ENCODE measurements at regions of chr12 and their contacts with region 1.

Region 1: GRCh38 chr12:8860165-8860961 is 37.9 kb downstream of the A2ML1 start:
- DNase-seq: peak; percentile 33
- H3K4me3 ChIP-seq: peak overlapping the region in 1 of 2 experiments; percentile 47; a peak in 1 of 4 replicates
- H3K27ac ChIP-seq: no peak overlapping the region
- H3K4me1 ChIP-seq: no peaks in the 10 kb centered on the region
- H3K27me3 ChIP-seq: no peaks in the 10 kb centered on the region; the same call in 1 of the 2 replicates
- CTCF ChIP-seq: peak; percentile 67
- EP300 ChIP-seq: no peak
- RAD21 ChIP-seq: peak; percentile 63

Region 2: DNA sequence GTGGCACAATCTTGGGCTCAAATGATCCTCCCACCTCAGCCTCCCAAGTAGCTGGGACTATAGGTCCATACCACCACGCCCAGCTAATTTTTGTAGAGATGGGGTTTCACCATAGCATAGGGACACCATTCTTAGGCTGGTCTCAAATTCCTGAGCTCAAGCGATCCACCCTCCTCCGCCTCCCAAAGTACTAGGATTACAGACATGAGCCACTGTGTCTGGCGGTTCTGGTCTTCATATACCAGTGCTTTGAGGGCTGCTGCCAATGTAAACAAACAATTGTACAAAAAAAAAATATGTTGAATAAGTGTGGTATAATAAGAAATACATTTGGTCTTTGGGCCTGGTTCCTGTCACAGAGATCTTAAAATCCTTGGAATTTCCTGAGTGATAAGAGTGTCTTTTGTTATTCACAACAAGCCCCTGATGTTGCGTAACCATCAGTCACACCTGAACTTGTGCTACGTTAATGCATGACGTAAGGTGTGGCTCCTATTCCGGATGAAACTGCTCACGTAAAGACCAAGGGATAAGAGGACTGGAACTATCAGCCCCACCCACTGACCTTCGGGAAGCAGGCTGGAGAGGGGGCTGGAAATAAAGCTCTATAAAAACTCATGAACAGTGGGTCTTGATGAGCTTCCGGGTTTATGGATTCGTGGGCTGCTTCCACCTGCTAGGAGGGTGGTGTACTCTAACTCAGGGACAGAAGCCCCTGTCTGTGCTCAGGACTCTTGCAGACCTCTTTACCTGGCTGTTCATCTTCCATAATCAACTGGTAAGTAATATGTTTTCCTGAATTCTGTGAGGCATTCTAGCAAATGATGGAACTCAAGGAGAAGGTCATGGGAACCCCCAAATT is 179.1 kb before region 1 on chr12:
- CTCF ChIA-PET with region 1: interaction called, 25 read pairs
- POLR2A ChIA-PET with region 1: no interaction called
- DNase-seq: no peak
- H3K4me3 ChIP-seq: no peak overlapping the region; a peak in 2 of 4 replicates
- H3K27ac ChIP-seq: no peak overlapping the region
- H3K4me1 ChIP-seq: no peaks in the 10 kb centered on the region; a peak in 1 of 4 replicates
- H3K27me3 ChIP-seq: no peaks in the 10 kb centered on the region
- CTCF ChIP-seq: no peak
- EP300 ChIP-seq: no peak
- RAD21 ChIP-seq: no peak

Region 3: DNA sequence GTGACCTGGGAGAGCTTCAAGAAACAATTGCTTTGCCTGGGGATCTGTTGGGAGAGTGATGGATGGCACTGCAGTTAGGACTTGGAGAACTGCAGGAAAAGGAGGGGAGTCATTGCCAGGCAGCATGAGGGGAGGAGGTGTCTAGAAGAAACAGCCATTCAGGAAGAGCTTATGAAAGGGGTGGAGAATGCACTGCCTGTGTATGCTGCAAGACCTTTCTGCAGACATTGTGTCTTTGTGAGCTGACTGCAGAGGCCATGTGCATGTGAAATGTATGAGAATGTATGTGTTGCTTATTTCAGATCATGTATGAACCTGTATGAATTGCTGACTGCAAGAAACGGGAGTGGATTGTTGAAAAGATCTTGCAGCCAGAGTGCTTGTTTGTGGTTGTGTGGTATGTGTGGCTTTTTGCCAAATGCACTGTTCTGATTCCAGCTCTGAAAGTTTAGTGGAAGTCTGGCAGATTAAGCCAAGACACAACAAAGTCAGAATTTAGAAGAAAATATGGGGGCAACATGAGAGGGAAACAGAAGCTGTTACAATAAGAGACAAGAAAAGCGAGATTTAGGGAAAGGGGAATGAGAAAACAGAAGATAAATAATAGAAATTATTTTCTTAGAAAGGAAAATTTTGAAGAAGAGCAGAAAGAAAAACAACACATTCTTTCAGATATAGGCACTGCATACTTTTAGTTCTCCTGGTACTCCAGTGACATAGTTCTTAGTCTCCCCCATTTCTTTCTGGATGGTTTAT is 172.3 kb before region 1 on chr12:
- CTCF ChIA-PET with region 1: interaction called, 25 read pairs
- POLR2A ChIA-PET with region 1: no interaction called
- DNase-seq: peak; percentile 77
- H3K4me3 ChIP-seq: peak overlapping the region; percentile 15 to 23; a peak in 3 of 4 replicates
- H3K27ac ChIP-seq: peak overlapping the region; percentile 40 to 82; a peak in 3 of 4 replicates
- H3K4me1 ChIP-seq: peaks cover 6 to 14% of the 10 kb centered on the region in 2 experiments; a peak in 3 of 4 replicates
- H3K27me3 ChIP-seq: no peaks in the 10 kb centered on the region
- CTCF ChIP-seq: no peak
- EP300 ChIP-seq: 0 out of 4 replicates have a peak, but pooled peaks of 1 of the 2 experiments have one; percentile 18
- RAD21 ChIP-seq: no peak

Region 4: DNA sequence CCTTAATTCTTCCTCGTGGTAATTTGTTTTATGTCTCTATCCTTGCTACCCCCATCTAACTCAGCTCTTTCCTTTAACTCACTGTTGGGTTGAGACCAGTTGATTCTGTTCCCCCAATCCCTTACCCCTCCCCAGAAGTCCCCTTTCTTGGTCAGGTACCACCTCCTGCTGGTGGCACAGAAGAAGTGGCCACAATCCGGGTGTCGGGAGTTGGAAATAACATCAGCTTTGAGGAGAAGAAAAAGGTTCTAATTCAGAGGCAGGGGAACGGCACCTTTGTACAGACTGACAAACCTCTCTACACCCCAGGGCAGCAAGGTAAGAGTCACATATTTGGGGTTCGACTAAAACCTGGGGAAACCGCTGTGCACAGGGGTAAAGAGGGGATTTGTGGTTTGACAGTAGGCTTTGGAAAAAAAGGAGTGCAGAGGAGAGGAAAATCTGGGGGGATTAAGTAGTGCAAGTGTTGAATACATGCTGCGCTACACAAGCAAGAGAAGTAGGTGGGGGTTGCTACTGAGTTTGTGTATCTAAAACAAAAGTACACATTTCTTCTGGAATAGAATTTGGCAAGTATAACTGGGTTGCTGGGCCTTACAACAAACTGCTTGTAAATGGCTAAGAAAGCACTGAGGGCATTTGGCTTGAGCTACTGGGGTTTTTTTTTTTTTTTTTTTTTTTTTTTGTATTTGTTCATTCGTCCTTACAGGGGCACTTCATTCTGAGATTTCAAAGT is 36.6 kb before region 1 on chr12:
- CTCF ChIA-PET with region 1: interaction called, 18 read pairs
- POLR2A ChIA-PET with region 1: no interaction called
- DNase-seq: peak; percentile 69
- H3K4me3 ChIP-seq: peak overlapping the region in 1 of 2 experiments; percentile 40; a peak in 1 of 4 replicates
- H3K27ac ChIP-seq: no peak overlapping the region
- H3K4me1 ChIP-seq: no peaks in the 10 kb centered on the region; a peak in 1 of 4 replicates
- H3K27me3 ChIP-seq: no peaks in the 10 kb centered on the region; the same call in 1 of the 2 replicates
- CTCF ChIP-seq: peak; percentile 61
- EP300 ChIP-seq: no peak
- RAD21 ChIP-seq: peak; percentile 88

Region 5: DNA sequence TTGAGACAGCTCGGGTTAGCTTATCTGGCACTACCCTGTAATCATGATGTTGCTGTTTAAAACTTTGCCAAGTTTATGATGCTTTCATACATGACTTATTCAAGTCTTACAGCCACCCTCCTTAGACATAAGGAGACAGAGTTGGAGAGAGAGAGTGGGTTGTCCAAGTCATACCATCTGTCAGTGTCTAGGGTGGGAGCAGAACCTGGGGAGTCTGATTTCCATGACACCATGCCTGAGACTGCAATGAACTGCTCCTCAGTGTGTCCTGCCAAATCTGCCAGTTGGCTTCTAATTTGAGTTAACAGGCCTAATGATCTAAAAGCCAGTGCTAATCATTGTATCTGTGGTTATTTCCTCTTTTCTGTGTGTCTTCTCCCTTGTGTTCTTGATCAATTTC is 10.2 kb after region 1 on chr12:
- CTCF ChIA-PET with region 1: interaction called, 10 read pairs
- POLR2A ChIA-PET with region 1: no interaction called
- DNase-seq: no peak
- H3K4me3 ChIP-seq: no peak overlapping the region
- H3K27ac ChIP-seq: no peak overlapping the region
- H3K4me1 ChIP-seq: no peaks in the 10 kb centered on the region
- H3K27me3 ChIP-seq: no peaks in the 10 kb centered on the region
- CTCF ChIP-seq: no peak
- EP300 ChIP-seq: no peak
- RAD21 ChIP-seq: no peak

Region 6: GRCh38 chr12:8876887-8877286 is 16.5 kb after region 1 on chr12:
- CTCF ChIA-PET with region 1: interaction called, 10 read pairs
- POLR2A ChIA-PET with region 1: no interaction called
- DNase-seq: no peak
- H3K4me3 ChIP-seq: no peak overlapping the region
- H3K27ac ChIP-seq: no peak overlapping the region
- H3K4me1 ChIP-seq: no peaks in the 10 kb centered on the region; a peak in 1 of 4 replicates
- H3K27me3 ChIP-seq: no peaks in the 10 kb centered on the region; the same call in 1 of the 2 replicates
- CTCF ChIP-seq: no peak
- EP300 ChIP-seq: no peak
- RAD21 ChIP-seq: no peak